Activated CD8-positive, alpha-beta memory T cell treated with anti-CD3 and anti-CD28 coated beads, Interleukin-2, amount 10 ng/mL, durations not matched to agents 7 days and 5 days (primary cell): ENCODE measurements at regions of chr17 and their contacts with region 1.

Region 1: GRCh38 chr17:1648963-1649843 is 463 bp downstream of the RILP start:
- DNase-seq: peak; percentile 96
- ATAC-seq: peak; percentile 81
- H3K4me3 Mint-ChIP-seq: peak overlapping the region; percentile 44
- H3K27ac Mint-ChIP-seq: peak overlapping the region; percentile 28
- H3K4me1 Mint-ChIP-seq: peaks cover 19% of the 10 kb centered on the region
- H3K27me3 Mint-ChIP-seq: no peaks in the 10 kb centered on the region

Region 2: DNA sequence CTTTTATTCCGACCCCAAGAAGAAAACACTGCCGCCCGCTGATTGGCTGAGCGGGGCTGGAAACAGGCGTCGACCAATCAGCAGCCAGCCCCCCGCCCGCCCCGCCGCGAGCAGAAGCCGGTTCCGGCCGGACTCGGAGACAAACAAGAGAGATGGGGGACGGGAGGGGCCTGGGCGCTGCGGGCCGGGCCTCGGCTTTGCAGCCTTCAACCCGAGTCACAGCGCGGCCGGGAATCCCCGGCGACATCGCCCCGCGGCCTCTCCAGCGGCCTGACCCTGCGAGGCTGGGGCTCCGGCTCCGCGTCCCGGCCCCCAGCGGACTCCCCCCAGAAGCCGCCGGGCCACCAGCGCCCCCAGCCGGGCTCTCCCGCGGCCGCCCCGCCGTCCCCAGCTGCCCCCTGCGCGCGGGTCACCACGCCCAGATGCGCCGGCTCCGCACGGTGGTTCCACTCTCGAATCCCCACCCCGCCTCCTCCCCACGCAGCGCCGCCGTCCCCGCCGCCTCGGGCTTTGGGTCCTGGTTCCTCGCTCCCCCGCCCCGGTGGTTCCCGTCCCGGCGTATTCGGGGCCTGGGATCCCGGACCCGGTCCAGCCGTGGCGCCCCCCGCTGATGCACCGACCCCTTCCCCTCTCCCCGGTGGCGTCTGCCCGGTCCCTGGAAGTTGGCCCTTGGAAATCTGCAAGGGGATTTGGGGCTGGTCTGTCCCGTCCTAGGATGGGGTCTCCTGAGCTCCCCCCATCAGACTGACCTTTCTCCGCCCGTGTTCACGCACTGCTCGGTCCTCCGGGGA is 20.2 kb before region 1 on chr17:
- CTCF ChIA-PET with region 1: interaction called, 25 read pairs
- DNase-seq: peak; percentile 94
- ATAC-seq: peak; percentile 83
- H3K4me3 Mint-ChIP-seq: peak overlapping the region; percentile 81
- H3K27ac Mint-ChIP-seq: peak overlapping the region; percentile 72
- H3K4me1 Mint-ChIP-seq: peaks cover 7% of the 10 kb centered on the region
- H3K27me3 Mint-ChIP-seq: peaks cover 38% of the 10 kb centered on the region

Region 3: GRCh38 chr17:1661045-1661444 is 11.8 kb after region 1 on chr17:
- CTCF ChIA-PET with region 1: interaction called, 12 read pairs
- DNase-seq: no peak
- ATAC-seq: no peak
- H3K4me3 Mint-ChIP-seq: no peak overlapping the region
- H3K27ac Mint-ChIP-seq: no peak overlapping the region
- H3K4me1 Mint-ChIP-seq: no peaks in the 10 kb centered on the region
- H3K27me3 Mint-ChIP-seq: no peaks in the 10 kb centered on the region

Region 4: DNA sequence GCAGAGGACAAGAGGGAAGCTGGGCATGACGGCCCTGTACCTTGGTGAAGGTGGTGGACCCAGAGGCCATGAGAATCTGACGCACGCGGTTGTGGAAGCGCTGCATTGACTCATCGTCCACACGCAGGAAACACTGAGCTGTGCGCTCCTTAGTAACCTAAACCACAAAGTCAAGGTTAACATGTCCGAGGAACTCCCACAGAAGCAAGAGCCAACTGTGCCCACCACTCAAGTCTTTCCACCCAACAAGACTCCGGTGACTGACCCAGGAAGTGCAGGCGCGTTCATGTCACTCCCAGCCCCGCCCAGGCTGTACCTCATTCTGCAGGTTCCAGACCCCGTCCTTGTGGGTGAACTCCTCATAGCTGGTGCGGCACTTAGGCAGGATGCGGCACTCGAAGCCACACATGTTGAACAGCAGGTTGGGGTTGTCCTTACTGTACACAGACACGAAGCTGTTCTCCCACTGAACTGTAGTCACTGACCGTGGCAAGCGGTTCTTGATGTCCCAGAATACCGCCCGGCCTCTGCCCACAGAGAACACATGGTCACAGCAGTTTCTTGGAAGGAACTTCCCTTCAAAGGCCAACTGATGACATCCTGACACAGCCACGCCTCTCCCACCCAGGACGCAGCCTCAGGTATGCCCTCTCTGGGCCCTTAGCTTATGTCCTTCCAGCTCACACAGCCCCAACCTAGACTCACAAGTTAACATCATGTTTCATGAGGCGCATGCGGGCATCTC is 24.0 kb after region 1 on chr17:
- CTCF ChIA-PET with region 1: interaction called, 13 read pairs
- DNase-seq: peak; percentile 58
- ATAC-seq: peak; percentile 47
- H3K4me3 Mint-ChIP-seq: no peak overlapping the region
- H3K27ac Mint-ChIP-seq: peak overlapping the region; percentile 32
- H3K4me1 Mint-ChIP-seq: peaks cover 19% of the 10 kb centered on the region
- H3K27me3 Mint-ChIP-seq: no peaks in the 10 kb centered on the region

Region 5: DNA sequence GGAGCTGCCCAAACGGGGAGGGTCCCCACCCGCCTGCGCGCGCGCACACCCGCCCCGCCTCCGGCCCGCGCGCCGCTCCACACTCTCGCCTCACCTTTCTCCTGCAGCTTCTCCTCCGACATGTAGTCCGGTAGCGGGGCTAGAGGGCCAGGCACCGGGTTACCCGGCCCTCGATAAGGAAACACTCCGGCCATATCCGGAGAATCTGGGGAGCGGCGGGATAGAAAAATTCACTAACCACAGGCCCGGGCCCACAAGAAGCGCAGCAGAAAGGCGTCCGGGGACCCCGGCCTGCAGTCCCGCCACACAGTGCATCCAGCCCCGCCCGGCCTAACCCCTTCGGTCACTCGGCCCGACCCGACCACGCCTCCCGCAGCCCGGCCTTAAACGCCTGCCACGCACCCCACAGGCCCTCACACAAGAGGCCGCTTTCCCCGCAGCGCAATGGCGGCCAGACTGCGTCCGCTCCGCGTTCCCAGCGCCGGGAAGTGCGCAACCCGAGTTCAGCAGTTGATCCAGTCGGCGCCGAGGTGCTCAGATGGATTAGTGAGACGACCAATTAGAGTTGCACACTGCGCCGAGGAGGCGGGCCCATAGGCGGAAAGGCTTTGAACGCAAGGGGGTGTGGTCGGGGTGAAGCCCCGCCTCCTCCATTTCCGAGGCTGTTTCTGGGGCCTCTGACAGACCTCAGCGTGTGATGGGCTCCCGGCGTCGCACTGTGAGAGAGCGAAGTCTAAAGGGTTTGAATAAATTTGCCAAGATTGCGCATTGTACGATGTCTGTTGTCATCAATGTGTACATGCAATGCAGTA is 35.4 kb after region 1 on chr17 and contains the start of gene PRPF8:
- CTCF ChIA-PET with region 1: interaction called, 16 read pairs
- DNase-seq: peak; percentile 99
- ATAC-seq: peak; percentile 100
- H3K4me3 Mint-ChIP-seq: peak within 1 kb of the TSS; percentile 99
- H3K27ac Mint-ChIP-seq: peak within 1 kb of the TSS; percentile 94
- H3K4me1 Mint-ChIP-seq: peaks cover 38% of the 10 kb centered on the region
- H3K27me3 Mint-ChIP-seq: no peaks in the 10 kb centered on the region
- total RNA-seq, gene PRPF8: 324 to 358 TPM